Aorta (tissue), 5 donors: ENCODE measurements at regions of chr2 and their contacts with region 1.

Region 1: DNA sequence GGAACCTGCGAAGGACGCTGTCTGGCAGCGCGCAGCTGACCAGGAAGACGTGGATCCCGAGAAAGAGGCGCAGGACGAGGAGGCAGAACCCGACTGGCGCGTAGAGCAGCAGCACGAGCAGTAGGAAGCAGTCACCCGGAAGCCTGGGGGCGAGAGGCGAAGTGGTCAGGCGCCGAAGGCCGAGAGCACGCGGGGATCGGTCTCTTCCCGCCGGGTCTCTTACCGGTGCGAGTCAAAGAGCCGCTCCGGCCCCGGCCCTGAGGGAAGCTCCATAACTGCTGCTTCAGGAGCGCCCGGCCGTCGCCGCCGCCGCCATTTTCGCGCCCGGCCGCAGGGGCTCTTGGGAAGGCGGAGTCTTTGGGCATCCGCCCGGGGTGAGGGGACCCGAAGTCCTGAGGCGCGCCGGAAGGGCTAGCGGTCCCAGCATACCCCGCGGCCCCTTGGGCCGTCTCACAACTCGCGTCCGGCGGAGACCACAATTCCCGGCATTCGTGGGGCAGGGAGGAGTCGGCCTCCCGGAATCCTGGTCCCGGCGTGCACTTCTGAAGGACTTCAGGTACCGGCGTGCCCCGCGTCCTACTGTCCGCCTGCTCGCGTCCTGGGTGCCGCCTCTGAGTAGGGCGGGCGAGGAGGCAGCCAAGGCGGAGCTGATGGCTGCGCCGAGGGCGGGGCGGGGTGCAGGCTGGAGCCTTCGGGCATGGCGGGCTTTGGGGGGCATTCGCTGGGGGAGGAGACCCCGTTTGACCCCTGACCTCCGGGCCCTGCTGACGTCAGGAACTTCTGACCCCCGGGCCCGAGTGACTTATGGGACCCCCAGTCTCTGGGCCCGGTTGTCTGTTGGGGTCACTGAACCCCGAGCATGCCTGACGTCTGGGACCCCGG is at the starts of genes AUP1 and HTRA2:
- DNase-seq: peak; percentile 99 to 100
- ATAC-seq: peak; percentile 98
- H3K4me3 ChIP-seq: peak within 1 kb of the TSS; percentile 73 to 83
- H3K27ac ChIP-seq: peak within 1 kb of the TSS in 1 of 2 donors; percentile 14
- H3K4me1 ChIP-seq: no peaks in the 10 kb centered on the region
- H3K27me3 ChIP-seq: no peaks in the 10 kb centered on the region
- total RNA-seq, gene AUP1: 73.0 to 85.4 TPM
- total RNA-seq, gene HTRA2: 31.9 to 35.4 TPM

Region 2: DNA sequence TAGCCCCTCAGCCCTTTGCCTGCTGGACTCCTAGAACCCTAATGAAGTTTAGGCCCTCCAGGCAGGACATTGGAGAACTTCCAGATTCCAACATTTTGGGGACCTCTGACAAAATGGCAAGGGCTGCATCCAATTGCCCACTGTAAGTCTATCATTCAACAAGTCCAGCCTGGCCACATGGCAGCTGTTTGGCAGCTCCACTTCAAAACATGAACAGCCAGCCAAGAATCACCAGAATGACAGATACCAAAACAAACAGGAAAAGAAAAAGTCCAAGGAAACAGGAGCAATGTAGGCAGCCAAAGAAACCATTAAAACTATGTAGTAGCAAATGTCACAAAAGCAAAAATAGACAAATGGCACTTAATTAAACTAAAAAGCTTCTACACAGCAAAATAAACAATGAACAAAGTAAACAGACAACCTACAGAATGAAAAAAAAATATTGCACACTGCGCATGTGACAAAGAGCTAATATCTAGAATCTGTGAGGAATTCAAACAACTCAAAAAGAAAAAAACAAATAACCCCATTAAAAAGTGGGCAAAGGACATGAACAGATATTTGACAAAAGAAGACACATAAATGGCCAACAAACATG is 211.8 kb before region 1 on chr2:
- intact Hi-C with region 1: no loop called
- DNase-seq: no peak
- ATAC-seq: no peak
- H3K4me3 ChIP-seq: no peak overlapping the region
- H3K27ac ChIP-seq: no peak overlapping the region
- H3K4me1 ChIP-seq: peaks cover 3 to 5% of the 10 kb centered on the region in 2 donors
- H3K27me3 ChIP-seq: no peaks in the 10 kb centered on the region

Region 3: DNA sequence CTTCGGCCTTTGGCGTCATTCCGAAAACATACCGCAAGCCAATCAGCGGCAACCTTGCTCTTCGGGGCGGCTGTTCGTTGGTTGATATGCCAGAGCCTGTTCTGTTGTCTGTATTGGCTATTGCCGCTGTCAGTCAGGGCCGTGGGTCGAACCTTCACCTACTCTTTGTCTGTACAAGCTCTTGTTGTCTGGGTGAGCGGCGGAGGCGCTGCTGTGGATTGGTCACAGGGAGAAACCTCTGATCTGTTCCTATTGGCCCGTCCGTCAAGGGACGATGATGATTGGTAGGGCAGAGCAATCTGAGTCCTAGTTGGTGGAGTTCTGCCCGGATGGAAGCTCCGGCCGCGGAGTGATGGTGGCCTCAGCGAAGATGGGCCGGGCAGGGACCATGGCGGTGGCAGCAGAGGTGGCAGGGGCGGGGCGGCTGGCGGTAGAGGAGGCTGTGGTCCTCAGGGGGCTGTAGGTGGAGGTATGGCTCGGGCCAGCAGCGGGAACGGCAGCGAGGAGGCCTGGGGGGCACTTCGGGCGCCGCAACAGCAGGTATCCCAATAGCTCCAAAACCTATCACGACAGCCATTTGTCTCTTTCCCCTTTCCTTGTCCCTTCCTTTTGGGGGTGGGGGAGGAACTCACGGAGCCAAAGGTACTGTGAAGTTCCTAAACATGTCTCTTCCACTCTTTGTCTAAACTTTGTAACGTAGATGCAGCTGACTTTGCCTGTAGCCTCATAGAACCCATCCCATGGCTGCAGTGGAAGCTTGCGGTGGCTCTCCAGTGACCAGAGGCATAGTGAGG is 71.3 kb before region 1 on chr2 and contains the start of gene WBP1:
- intact Hi-C with region 1: no loop called
- DNase-seq: peak; percentile 99 to 100
- ATAC-seq: peak; percentile 96
- H3K4me3 ChIP-seq: peak within 1 kb of the TSS; percentile 53 to 64
- H3K27ac ChIP-seq: peak within 1 kb of the TSS; percentile 68 to 85
- H3K4me1 ChIP-seq: peaks cover 2 to 3% of the 10 kb centered on the region in 2 donors
- H3K27me3 ChIP-seq: no peaks in the 10 kb centered on the region
- total RNA-seq, gene WBP1: 38.1 to 56.5 TPM

Region 4: GRCh38 chr2:74482801-74483674 is 46.6 kb before region 1 on chr2 and contains the starts of genes CCDC142 and TTC31:
- intact Hi-C with region 1: loop called in 1 of 2 experiments (anchors 1 kb)
- DNase-seq: peak; percentile 97 to 98
- ATAC-seq: peak; percentile 99
- H3K4me3 ChIP-seq: peak within 1 kb of the TSS; percentile 50 to 62
- H3K27ac ChIP-seq: peak within 1 kb of the TSS in 1 of 2 donors; percentile 53
- H3K4me1 ChIP-seq: peaks cover 0 to 3% of the 10 kb centered on the region in 2 donors
- H3K27me3 ChIP-seq: no peaks in the 10 kb centered on the region
- total RNA-seq, gene CCDC142: 16.1 to 26.0 TPM
- total RNA-seq, gene TTC31: 19.2 to 29.5 TPM

Region 5: DNA sequence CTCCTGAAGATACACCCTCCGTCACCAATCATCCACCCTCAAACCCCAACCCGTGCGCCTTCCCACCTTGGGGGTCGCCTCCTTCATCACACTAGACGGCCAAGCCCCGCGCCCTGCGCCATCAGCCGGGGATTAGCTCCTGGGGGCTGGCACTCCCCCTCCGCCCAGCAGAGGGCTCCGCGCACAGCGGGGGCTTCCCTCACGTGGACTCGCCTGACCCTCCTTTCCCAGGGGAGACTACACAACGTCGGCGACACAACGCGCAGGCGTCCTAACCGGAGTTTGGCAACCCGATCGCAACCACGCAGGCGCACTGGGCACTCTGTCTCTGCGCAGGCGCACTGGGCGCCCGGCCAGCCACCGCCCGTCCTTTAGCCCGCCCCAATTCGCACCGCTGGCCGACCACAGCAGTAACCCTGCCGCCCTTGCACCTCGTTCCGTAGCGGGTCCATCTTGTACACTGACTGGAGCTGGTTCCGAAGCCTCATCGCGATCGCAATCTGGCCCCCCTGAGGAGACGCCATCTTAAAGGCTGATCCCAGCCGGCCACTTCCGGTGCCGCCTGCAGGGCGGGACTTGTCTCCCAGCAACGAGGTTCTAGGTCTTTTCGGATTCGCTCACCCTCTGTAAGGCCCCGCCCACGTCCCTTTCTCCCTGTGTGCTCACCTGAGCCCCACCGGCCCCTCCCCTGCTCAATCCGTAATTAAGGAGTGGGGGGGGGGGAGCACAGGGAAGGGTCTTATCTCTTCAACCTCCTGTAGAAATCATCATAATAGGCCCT is 22.3 kb before region 1 on chr2 and contains the start of gene PCGF1:
- intact Hi-C with region 1: loop called in 1 of 2 experiments (anchors 2 kb)
- DNase-seq: peak; percentile 99 to 100
- ATAC-seq: peak; percentile 96
- H3K4me3 ChIP-seq: peak within 1 kb of the TSS; percentile 16 to 51
- H3K27ac ChIP-seq: peak within 1 kb of the TSS in 1 of 2 donors; percentile 79
- H3K4me1 ChIP-seq: no peaks in the 10 kb centered on the region
- H3K27me3 ChIP-seq: no peaks in the 10 kb centered on the region
- total RNA-seq, gene PCGF1: 13.3 to 15.9 TPM

Region 6: GRCh38 chr2:74553892-74554645 is 24.5 kb after region 1 on chr2 and contains the start of gene LOXL3:
- intact Hi-C with region 1: loop called in 1 of 2 experiments (anchors 1 kb)
- DNase-seq: peak; percentile 93 to 94
- ATAC-seq: peak; percentile 91
- H3K4me3 ChIP-seq: peak within 1 kb of the TSS; percentile 39 to 74
- H3K27ac ChIP-seq: peak within 1 kb of the TSS in 1 of 2 donors; percentile 65
- H3K4me1 ChIP-seq: no peaks in the 10 kb centered on the region
- H3K27me3 ChIP-seq: no peaks in the 10 kb centered on the region
- total RNA-seq, gene LOXL3: 18.9 to 27.1 TPM

Region 7: DNA sequence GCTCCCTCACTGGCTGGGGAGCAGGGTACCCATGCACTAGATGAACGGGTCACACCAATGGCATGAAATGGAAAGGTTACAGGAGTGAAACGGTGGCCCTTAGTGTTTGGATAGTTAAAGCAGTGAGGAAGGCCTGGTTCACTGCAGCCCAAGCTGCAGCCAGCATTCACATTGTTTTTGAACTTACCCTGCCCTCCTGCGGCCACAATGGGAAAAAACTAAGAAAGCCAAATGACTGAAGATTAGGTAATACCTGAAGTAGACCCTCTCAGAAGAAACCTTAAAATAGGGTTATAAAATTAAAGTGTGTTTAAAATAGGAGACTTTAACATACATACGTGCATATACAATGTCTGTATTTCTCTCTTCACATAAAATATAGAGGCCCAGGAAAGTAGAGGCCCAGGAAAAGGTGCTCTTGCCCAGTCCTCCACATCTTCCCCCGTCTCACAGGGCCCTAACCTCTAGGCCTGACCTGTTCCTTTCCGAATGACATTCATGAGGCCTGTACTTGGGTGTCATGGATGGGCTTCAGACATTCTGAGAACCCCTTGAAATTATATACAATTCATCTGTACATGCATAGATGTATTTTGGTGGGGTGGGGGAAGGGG is 58.2 kb after region 1 on chr2:
- intact Hi-C with region 1: loop called (anchors 5 to 10 kb)
- DNase-seq: peak; percentile 75 to 81
- ATAC-seq: peak; percentile 91
- H3K4me3 ChIP-seq: no peak overlapping the region
- H3K27ac ChIP-seq: no peak overlapping the region
- H3K4me1 ChIP-seq: peaks cover 1 to 3% of the 10 kb centered on the region in 2 donors
- H3K27me3 ChIP-seq: no peaks in the 10 kb centered on the region

Region 8: GRCh38 chr2:74908748-74909444 is 379.3 kb after region 1 on chr2:
- intact Hi-C with region 1: no loop called
- DNase-seq: no peak
- ATAC-seq: no peak
- H3K4me3 ChIP-seq: no peak overlapping the region
- H3K27ac ChIP-seq: no peak overlapping the region
- H3K4me1 ChIP-seq: no peaks in the 10 kb centered on the region
- H3K27me3 ChIP-seq: no peaks in the 10 kb centered on the region